ENCODE measurements at regions of chr1 and their contacts with region 1.

Region 1: DNA sequence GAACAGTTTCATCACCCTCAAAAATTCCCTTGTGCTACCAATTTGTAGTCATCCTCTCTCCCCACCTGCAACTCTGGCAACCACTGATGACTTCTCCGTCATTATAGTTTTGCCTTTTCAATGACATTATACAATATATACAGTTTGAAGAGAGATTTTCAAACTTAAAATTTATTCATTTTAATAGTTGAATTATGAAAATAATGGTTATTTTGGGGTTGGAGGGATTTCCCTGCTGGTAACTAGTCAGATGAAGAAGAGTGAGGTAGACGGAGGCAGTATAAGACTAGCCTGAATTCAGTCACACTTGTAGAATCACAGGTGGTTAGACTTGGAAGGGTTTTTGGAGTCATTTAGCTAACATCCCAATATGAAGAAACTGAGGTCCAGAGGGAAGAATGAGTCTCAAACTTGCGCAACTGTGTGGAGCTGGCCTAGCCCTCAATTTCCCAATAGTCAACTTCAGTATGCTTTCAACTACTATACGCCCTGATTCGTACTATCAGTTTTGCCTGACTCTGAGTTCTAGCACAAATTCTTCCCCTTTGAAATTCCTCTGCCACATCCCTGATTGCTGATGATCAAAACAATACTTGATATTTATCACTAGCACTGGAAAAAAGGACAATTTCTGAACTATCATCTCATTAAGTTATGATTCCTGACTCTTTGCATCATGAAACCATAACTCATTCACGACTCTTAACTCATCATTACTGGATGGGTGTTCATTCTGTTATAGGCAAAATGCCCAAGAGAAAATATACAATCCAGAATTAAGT is 54.2 kb downstream of the VANGL2 start:
- DNase-seq: no peak
- ATAC-seq: no peak
- H3K4me3 Mint-ChIP-seq: no peak overlapping the region
- H3K27ac Mint-ChIP-seq: peak overlapping the region; percentile 8
- H3K4me1 Mint-ChIP-seq: peaks cover 46% of the 10 kb centered on the region
- H3K27me3 Mint-ChIP-seq: no peaks in the 10 kb centered on the region

Region 2: GRCh38 chr1:160428655-160429054 is 25.9 kb before region 1 on chr1:
- CTCF ChIA-PET with region 1: interaction called, 10 read pairs
- DNase-seq: peak; percentile 51
- ATAC-seq: peak; percentile 56
- H3K4me3 Mint-ChIP-seq: peak overlapping the region; percentile 51
- H3K27ac Mint-ChIP-seq: peak overlapping the region; percentile 83
- H3K4me1 Mint-ChIP-seq: peaks cover 55% of the 10 kb centered on the region
- H3K27me3 Mint-ChIP-seq: no peaks in the 10 kb centered on the region

Measured in activated CD8-positive, alpha-beta memory T cell treated with anti-CD3 and anti-CD28 coated beads, Interleukin-2, amount 10 ng/mL, durations not matched to agents 7 days and 5 days (primary cell).